PC-9 (cell line): ENCODE measurements at regions of chr3 and their contacts with region 1.

Region 1: GRCh38 chr3:171049861-171050444 is 23.4 kb upstream of the SLC2A2 start:
- DNase-seq: peak; percentile 53 to 64
- H3K4me3 ChIP-seq: no peak overlapping the region
- H3K27ac ChIP-seq: no peak overlapping the region
- H3K4me1 ChIP-seq: peaks cover 24% of the 10 kb centered on the region
- H3K27me3 ChIP-seq: no peaks in the 10 kb centered on the region
- CTCF ChIP-seq: peak; percentile 86

Region 2: DNA sequence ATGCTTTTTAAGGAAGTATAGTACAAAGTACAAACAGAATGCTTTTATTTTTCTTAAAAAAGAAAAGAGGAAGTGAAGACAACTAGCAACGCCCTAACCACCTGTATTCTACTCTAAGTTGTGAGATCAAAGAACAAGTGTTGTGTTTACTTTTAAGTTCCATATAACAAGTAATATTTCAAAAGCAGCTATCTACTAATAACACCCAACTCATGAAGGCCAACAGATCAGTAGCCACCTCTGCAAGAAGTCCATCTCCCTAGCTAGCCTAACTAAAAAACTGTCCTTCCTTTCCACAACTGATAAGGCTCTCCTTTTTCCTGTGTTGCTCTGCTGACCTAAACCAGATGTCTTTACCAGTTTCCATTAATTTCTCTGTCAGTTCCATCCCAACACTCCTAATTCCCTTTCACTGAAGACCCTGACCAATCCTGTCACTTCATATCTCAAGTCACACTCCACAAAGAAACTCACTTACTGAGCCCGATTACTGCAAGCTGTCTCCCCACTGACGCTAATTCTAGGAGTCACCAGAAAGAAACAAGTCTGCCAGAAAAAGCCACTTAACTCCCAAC is 895.3 kb before region 1 on chr3:
- CTCF ChIA-PET with region 1: no interaction called
- POLR2A ChIA-PET with region 1: interaction called, 10 read pairs
- intact Hi-C with region 1: no loop called
- DNase-seq: no peak
- H3K4me3 ChIP-seq: no peak overlapping the region
- H3K27ac ChIP-seq: peak overlapping the region; percentile 3; the same call in 1 of the 2 replicates
- H3K4me1 ChIP-seq: no peaks in the 10 kb centered on the region
- H3K27me3 ChIP-seq: no peaks in the 10 kb centered on the region
- CTCF ChIP-seq: no peak

Region 3: GRCh38 chr3:171028025-171028778 is 21.8 kb before region 1 on chr3:
- CTCF ChIA-PET with region 1: interaction called, 3 read pairs
- POLR2A ChIA-PET with region 1: no interaction called
- intact Hi-C with region 1: loop called (anchors 2 kb)
- DNase-seq: peak; percentile 61 to 76
- H3K4me3 ChIP-seq: peak overlapping the region; percentile 48; the same call in 1 of the 2 replicates
- H3K27ac ChIP-seq: peak overlapping the region; percentile 36
- H3K4me1 ChIP-seq: peaks cover 11% of the 10 kb centered on the region
- H3K27me3 ChIP-seq: no peaks in the 10 kb centered on the region
- CTCF ChIP-seq: no peak

Region 4: DNA sequence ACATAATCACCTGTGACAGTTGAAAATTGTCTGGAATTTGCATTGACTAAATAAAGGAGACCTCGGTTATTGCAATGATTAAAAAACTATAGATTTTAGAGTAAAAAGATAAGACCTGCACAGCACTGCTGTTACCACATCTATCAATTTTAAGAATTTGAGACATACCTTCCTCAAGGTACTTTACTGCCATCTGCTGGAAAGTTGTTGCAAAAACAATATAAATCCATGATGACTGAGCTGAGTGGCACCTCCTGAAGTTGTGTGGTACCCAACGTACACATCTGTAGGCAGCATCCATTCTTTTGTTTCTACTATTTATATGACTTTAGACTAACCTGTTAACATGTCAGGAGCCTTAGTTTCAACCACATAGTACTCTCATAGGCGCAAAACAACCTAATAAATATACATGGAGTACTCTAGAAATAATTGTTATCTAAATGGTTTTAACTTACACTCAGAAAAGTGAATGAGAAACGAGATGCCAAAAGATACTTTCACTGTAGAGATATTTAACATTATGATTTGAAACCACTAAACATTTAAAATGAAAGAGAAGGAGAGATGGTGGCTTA is 1291.6 kb after region 1 on chr3:
- CTCF ChIA-PET with region 1: no interaction called
- POLR2A ChIA-PET with region 1: no interaction called
- intact Hi-C with region 1: loop called (anchors 10 kb)
- DNase-seq: peak; percentile 24 to 77
- H3K4me3 ChIP-seq: no peak overlapping the region
- H3K27ac ChIP-seq: no peak overlapping the region
- H3K4me1 ChIP-seq: peaks cover 6% of the 10 kb centered on the region; the same call in 1 of the 2 replicates
- H3K27me3 ChIP-seq: no peaks in the 10 kb centered on the region
- CTCF ChIP-seq: peak; percentile 89